Common myeloid progenitor, CD34-positive (primary cell): ENCODE measurements at regions of chr12 and their contacts with region 1.

Region 1: GRCh38 chr12:219891-220352 is 6.0 kb upstream of the SLC6A12 start:
- DNase-seq: peak; percentile 85 to 91 (median 91)
- H3K4me3 ChIP-seq: peak overlapping the region in 4 of 7 experiments; percentile 3 to 44 (median 23)
- H3K27ac ChIP-seq: no peak overlapping the region
- H3K4me1 ChIP-seq: peaks cover 0 to 7% (median 2%) of the 10 kb centered on the region in 4 experiments
- H3K27me3 ChIP-seq: no peaks in the 10 kb centered on the region

Region 2: GRCh38 chr12:203462-204260 is 16.3 kb before region 1 on chr12:
- CTCF ChIA-PET with region 1: interaction called, 28 read pairs
- POLR2A ChIA-PET with region 1: no interaction called
- DNase-seq: peak in 1 of 3 donors; percentile 44
- H3K4me3 ChIP-seq: peak overlapping the region in 6 of 7 experiments; percentile 43 to 68 (median 50)
- H3K27ac ChIP-seq: no peak overlapping the region
- H3K4me1 ChIP-seq: peaks cover 0 to 11% (median 7%) of the 10 kb centered on the region in 4 experiments
- H3K27me3 ChIP-seq: peaks cover 2 to 63% (median 38%) of the 10 kb centered on the region in 5 experiments

Region 3: DNA sequence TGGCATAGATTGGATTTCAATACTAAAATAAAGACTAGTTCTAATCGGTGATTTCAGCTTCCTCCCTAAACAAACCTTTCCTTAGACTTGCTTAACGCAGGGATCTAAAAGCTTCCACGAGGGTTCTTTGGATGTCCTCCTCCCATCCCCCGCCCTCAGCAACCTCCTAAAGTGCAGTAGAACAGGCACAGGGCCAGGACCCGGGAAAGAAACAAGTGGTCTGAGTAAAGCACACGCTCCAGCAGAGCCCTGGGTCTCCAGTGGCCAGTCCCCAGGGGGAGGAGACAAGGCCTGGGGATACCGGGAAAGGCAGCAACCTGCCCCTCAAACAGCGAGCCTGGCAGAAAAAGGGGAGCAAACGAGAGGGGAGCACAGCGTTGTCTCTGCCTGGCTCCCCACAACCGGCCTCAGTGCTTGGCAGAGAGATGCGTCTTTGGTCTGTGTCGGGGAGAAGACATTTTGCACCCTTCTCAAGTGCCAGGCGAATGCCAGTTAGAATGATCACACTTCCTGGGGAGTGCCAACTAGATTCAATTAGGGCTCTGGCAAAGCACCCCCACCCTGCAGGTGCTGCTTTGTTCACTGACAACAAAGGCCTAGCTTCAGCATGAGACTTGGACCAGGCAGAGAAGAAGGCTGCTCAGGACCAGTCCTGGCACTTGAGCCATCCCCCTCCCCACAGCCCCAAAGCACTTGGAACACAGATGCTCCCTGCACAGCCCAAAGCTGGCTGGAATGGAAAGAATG is 11.2 kb after region 1 on chr12:
- CTCF ChIA-PET with region 1: interaction called, 14 read pairs
- POLR2A ChIA-PET with region 1: no interaction called
- DNase-seq: no peak
- H3K4me3 ChIP-seq: no peak overlapping the region
- H3K27ac ChIP-seq: no peak overlapping the region
- H3K4me1 ChIP-seq: no peaks in the 10 kb centered on the region
- H3K27me3 ChIP-seq: peaks cover 0 to 12% (median 0%) of the 10 kb centered on the region in 5 experiments